ENCODE measurements at regions of chr14 and their contacts with region 1.

Region 1: DNA sequence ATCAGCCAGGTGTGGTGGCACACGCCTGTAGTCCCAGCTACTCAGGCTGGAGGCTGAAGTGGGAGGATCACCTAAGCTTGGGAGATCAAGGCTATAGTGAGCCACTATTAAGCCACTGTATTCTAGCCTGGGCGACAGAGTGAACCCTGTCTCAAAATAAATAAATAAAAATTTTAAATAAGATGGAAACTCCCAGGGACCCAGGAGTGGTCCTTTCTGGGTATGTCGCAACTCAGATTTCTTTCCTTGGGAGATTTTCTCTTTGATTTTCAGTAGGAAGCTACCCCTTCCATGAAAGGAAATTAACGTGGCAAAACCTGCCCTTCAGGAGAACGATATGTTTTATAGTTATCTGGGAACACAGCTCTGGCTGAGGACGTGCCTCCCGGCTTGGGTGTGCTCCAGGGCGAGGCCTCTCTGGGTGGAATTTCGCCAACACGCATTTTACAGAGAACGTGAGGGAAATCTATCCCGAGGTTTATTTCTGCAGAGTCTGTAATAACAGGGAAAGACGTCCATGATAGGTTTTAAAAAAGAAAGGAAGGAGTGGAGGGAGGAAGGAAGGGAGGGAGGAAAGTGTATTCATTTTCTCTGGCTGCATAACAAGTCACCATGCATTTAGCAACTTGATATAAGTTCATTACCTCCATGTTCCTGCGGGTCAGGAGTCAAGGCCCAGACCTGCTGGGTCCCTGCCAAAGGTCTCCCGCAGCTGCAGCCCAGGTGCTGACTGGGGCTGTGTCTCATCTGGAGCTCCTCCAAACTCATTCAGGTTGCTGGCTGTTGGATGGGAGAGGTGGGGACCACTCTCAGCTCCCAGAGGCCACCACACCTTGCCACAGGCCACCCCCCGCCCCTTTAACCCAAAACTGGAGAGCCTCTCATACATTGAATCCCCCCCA is 80.6 kb upstream of the GSC start:
- DNase-seq: no peak
- H3K4me3 Mint-ChIP-seq: no peak overlapping the region
- H3K27ac Mint-ChIP-seq: no peak overlapping the region
- H3K4me1 Mint-ChIP-seq: no peaks in the 10 kb centered on the region
- H3K27me3 Mint-ChIP-seq: peaks cover 56% of the 10 kb centered on the region
- CTCF ChIP-seq: no peak

Region 2: DNA sequence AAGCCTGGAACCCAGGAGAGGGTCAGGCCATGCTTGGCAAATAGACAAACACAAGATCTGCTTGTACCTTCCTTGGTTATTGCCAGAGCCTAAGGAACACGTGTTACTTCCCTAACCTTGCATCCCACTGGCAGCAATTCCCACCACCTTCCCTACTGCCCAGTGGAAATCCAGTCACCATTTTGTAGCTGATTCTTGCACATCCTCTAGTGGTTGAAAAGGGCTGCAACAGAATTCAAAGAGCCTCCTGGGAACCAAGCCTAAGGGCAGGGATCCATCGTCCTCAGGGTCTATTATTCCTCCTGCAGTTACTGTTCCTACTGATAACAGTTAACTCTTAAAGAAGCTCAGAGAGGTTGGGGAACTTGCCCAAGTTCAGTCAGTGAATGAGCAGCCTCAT is 27.6 kb before region 1 on chr14:
- CTCF ChIA-PET with region 1: interaction called, 12 read pairs
- intact Hi-C with region 1: no loop called
- DNase-seq: no peak
- H3K4me3 Mint-ChIP-seq: no peak overlapping the region
- H3K27ac Mint-ChIP-seq: no peak overlapping the region
- H3K4me1 Mint-ChIP-seq: no peaks in the 10 kb centered on the region
- H3K27me3 Mint-ChIP-seq: peaks cover 48% of the 10 kb centered on the region
- CTCF ChIP-seq: no peak

Measured in Calu3 (cell line).